ENCODE measurements at regions of chr17 and their contacts with region 1.

Region 1: DNA sequence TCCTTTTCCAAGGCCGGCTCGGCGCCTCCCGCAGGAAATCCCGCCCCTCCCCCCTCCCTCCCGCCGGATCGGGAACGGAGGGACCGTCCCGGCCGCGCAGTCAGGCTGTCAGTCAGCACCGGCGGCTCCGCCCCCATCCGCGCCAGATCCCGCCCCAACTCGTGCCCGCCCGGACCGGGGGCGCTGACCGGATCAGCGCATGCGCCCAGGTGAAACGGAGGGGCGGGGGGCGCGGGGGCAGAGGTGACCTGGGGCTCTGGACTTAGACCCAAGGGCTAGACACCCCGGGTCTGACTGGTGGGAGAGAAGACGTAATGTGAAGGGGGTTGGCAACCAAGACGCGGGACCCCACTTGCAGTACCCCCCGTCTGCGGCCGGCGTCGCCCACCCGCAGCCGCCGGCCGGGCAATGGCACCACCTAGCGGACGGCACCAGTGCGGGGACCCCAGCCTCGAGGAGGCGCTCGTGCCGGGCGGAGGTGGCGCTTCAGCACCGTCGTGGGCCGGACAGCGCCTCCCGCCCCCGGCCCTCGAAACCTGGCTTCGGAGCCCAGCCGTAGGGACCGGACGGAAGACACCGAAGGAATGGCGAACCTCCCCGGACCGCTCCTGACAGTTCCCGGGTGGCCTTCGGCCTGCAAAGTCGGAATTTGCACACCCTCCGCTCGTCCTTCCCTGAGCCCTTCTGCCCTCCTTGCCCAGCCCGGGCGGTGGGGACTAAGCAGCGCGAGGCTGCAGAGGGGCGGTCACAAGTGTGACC is at the start of gene CASKIN2:
- DNase-seq: peak; percentile 93
- ATAC-seq: peak; percentile 61
- H3K4me3 Mint-ChIP-seq: peak within 1 kb of the TSS; percentile 68
- H3K27ac Mint-ChIP-seq: no peak within 1 kb of the TSS
- H3K4me1 Mint-ChIP-seq: peaks cover 22% of the 10 kb centered on the region
- H3K27me3 Mint-ChIP-seq: peaks cover 3% of the 10 kb centered on the region
- total RNA-seq, gene CASKIN2: 2.9 to 3.0 TPM

Region 2: GRCh38 chr17:74776044-74776977 is 739.4 kb before region 1 on chr17 and contains the start of gene NAT9:
- CTCF ChIA-PET with region 1: no interaction called
- POLR2A ChIA-PET with region 1: no interaction called
- intact Hi-C with region 1: loop called in 1 of 2 experiments (anchors 5 kb)
- DNase-seq: peak; percentile 100
- ATAC-seq: peak; percentile 76
- H3K4me3 Mint-ChIP-seq: peak within 1 kb of the TSS; percentile 98
- H3K27ac Mint-ChIP-seq: peak within 1 kb of the TSS; percentile 94
- H3K4me1 Mint-ChIP-seq: peaks cover 59% of the 10 kb centered on the region
- H3K27me3 Mint-ChIP-seq: no peaks in the 10 kb centered on the region
- total RNA-seq, gene NAT9: 23.7 to 39.6 TPM

Region 3: DNA sequence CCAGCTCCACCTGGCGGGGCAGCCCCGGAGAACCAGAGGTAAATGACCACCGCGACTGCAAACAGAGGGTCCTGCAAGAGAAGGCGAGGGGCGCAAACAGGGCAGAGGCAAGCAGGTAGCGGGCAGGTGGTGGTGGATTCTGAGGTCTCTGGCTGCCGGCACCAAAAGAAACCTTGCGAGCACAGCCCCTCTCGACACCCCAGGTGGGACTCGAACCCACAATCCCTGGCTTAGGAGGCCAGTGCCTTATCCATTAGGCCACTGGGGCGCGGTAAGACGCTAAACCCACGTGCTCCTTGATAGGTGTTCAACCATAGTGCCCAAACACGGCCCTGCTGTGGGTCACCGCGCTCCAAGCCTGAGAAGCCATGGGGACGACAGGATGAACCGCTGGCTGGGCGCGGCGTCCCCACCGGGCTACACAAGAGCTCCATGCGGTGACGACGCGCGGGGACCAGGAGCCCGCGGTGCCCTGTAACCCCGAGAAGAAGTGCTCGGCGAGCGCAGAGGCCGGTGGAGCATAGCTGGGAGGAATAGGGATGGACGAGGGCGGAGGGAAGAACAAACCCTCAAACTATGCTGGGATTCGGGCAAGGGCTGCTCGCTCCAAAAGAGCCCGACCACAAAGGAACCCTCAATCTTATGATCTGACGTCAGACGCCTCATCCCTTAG is 481.3 kb before region 1 on chr17:
- CTCF ChIA-PET with region 1: no interaction called
- POLR2A ChIA-PET with region 1: no interaction called
- intact Hi-C with region 1: loop called in 1 of 2 experiments (anchors 5 kb)
- DNase-seq: peak; percentile 96
- ATAC-seq: peak; percentile 65
- H3K4me3 Mint-ChIP-seq: peak overlapping the region; percentile 91
- H3K27ac Mint-ChIP-seq: peak overlapping the region; percentile 96
- H3K4me1 Mint-ChIP-seq: peaks cover 49% of the 10 kb centered on the region
- H3K27me3 Mint-ChIP-seq: no peaks in the 10 kb centered on the region

Region 4: DNA sequence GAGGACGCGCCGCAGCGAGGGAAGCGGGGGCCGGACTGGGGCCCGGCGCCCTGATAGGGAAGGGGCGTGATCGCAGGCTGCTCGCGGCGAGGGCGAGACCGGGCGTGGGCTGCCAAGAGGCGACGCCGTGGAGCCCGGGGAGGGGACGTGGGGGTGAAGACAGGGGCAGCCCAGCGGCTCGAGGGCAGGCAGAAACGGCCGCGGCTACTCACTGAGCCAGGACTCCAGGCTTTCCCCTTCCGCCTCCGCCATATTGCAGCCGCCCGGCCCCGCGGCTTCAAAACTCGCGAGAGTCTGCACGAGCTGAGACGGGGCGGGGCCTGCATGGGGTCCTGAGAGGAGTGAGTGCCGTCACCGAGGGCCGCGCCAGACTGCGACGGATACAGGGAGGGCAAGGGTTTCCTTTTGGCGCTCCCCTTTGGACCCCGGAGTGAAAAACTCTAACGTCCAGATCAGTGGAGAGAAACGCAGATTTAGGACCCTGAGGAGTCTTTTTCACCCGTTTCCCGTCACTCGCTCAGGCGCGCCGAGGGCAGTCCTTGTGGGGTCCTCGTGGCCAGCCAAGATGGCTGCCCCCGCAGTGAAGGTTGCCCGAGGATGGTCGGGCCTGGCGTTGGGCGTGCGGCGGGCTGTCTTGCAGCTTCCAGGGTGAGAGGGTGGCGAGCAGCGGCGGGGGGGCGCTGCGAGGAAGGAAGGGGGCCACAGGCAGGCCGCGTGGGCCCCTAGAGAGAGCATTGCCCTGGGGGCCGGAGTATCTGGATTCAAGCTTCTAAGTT is 254.2 kb before region 1 on chr17 and contains the starts of genes GGA3 and MRPS7:
- CTCF ChIA-PET with region 1: interaction called, 4 read pairs
- POLR2A ChIA-PET with region 1: interaction called, 5 read pairs
- intact Hi-C with region 1: loop called (anchors 2 to 10 kb)
- DNase-seq: peak; percentile 98
- ATAC-seq: peak; percentile 91
- H3K4me3 Mint-ChIP-seq: peak within 1 kb of the TSS; percentile 88
- H3K27ac Mint-ChIP-seq: peak within 1 kb of the TSS; percentile 96
- H3K4me1 Mint-ChIP-seq: peaks cover 48% of the 10 kb centered on the region
- H3K27me3 Mint-ChIP-seq: no peaks in the 10 kb centered on the region
- total RNA-seq, gene GGA3: 72.9 to 76.7 TPM
- total RNA-seq, gene MRPS7: 51.4 to 63.8 TPM

Region 5: GRCh38 chr17:75456417-75457046 is 59.1 kb before region 1 on chr17 and contains the start of gene TMEM94:
- CTCF ChIA-PET with region 1: interaction called, 5 read pairs
- POLR2A ChIA-PET with region 1: no interaction called
- intact Hi-C with region 1: loop called in 1 of 2 experiments (anchors 1 kb)
- DNase-seq: peak; percentile 95
- ATAC-seq: peak; percentile 99
- H3K4me3 Mint-ChIP-seq: peak within 1 kb of the TSS; percentile 89
- H3K27ac Mint-ChIP-seq: peak within 1 kb of the TSS; percentile 92
- H3K4me1 Mint-ChIP-seq: peaks cover 24% of the 10 kb centered on the region
- H3K27me3 Mint-ChIP-seq: no peaks in the 10 kb centered on the region
- total RNA-seq, gene TMEM94: 51.4 to 62.5 TPM

Region 6: DNA sequence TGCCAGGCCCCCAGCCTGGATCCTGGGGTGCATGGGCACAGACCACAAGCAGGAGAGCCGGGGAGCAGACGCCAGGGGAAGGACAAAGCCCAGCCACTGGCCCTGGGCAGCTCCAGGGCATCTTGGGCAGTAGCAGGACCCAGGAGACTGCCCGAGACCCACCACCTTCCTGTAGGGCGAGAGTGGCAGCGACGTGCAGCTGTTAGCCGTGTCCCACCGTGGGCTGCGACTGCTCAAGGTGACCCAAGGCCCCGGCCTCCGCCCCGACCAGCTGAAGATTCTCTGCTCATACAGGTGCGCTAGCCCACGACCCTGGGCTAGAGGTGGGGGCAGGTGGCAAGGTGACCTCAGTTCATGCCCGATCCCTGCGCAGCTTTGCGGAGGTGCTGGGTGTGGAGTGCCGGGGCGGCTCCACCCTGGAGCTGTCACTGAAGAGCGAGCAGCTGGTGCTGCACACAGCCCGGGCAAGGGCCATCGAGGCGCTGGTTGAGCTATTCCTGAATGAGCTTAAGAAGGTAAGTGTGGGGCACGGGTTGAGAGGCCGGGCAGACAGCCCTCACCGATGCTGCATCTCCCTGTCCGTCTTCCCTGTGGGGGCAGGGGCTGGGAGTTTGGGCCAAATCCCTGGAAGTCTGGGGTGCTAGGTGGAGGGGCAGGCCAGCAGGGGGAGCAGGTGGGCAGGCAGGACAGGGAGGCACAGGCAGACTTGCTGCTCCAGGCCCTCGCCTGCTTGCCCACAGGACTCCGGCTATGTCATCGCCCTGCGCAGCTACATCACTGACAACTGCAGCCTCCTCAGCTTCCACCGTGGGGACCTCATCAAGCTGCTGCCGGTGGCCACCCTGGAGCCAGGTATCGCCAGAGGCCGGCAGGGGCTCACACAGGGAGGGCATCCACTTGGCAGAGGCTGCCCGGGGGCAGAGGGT is 104.1 kb after region 1 on chr17:
- CTCF ChIA-PET with region 1: no interaction called
- POLR2A ChIA-PET with region 1: no interaction called
- intact Hi-C with region 1: no loop called
- DNase-seq: peak; percentile 65
- ATAC-seq: no peak
- H3K4me3 Mint-ChIP-seq: no peak overlapping the region
- H3K27ac Mint-ChIP-seq: no peak overlapping the region
- H3K4me1 Mint-ChIP-seq: no peaks in the 10 kb centered on the region
- H3K27me3 Mint-ChIP-seq: no peaks in the 10 kb centered on the region

Region 7: DNA sequence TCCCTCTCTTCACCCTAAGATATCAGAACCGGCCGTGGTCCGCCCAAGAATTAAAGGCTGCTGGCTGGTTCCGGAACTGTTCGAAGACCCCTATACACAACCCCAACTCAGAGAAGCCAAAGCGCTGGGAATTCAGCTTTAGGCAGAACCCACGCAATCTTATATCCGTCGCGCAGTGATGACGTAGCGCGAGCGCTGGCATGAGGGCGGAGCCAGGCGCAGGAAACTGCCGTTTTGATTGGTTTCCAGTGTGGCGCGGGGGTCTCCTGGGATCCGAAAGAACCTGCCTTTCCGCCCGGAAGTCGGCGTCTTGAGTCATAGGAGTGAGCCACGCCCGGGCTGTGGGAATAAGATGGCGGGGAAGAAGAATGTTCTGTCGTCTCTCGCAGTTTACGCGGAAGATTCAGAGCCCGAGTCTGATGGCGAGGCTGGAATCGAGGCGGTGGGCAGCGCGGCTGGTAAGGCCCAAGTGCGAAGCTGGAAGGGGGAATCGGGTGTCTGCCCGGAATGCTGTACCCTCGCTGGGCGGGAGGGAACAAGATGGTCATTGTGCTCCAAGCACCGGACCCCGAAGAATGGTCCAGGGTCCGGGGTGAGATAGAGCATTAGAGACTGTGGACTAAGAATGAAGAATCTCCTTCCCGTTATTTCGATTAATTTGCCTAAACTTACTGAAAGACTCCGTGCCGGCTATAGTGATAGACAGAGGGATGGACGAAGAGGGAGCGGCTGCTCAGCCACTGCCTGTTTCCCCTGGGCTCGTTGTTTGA is 151.5 kb after region 1 on chr17 and contains the starts of genes RECQL5 and SAP30BP:
- CTCF ChIA-PET with region 1: no interaction called
- POLR2A ChIA-PET with region 1: no interaction called
- intact Hi-C with region 1: loop called (anchors 1 to 2 kb)
- DNase-seq: peak; percentile 99
- ATAC-seq: peak; percentile 100
- H3K4me3 Mint-ChIP-seq: no peak within 1 kb of the TSS
- H3K27ac Mint-ChIP-seq: no peak within 1 kb of the TSS
- H3K4me1 Mint-ChIP-seq: peaks cover 34% of the 10 kb centered on the region
- H3K27me3 Mint-ChIP-seq: no peaks in the 10 kb centered on the region
- total RNA-seq, gene RECQL5: 36.4 to 40.5 TPM
- total RNA-seq, gene SAP30BP: 87.8 to 100.0 TPM

Region 8: GRCh38 chr17:76501018-76501826 is 985.5 kb after region 1 on chr17 and contains the start of gene RHBDF2:
- CTCF ChIA-PET with region 1: no interaction called
- POLR2A ChIA-PET with region 1: no interaction called
- intact Hi-C with region 1: loop called in 1 of 2 experiments (anchors 1 kb)
- DNase-seq: peak; percentile 98
- ATAC-seq: peak; percentile 91
- H3K4me3 Mint-ChIP-seq: peak within 1 kb of the TSS; percentile 87
- H3K27ac Mint-ChIP-seq: peak within 1 kb of the TSS; percentile 94
- H3K4me1 Mint-ChIP-seq: peaks cover 29% of the 10 kb centered on the region
- H3K27me3 Mint-ChIP-seq: no peaks in the 10 kb centered on the region
- total RNA-seq, gene RHBDF2: 23.9 to 28.4 TPM

Measured in activated CD4-positive, alpha-beta T cell treated with anti-CD3 and anti-CD28 coated beads for 36 hours (primary cell).